Endothelial cell of umbilical vein (primary cell): ENCODE measurements at regions of chr1 and their contacts with region 1.

Region 1: GRCh38 chr1:81876901-81877733 is 76.4 kb downstream of the ADGRL2 start:
- DNase-seq: peak; percentile 83
- H3K4me3 ChIP-seq: no peak overlapping the region
- H3K27ac ChIP-seq: peak overlapping the region; percentile 58
- H3K4me1 ChIP-seq: peaks cover 34% of the 10 kb centered on the region
- H3K27me3 ChIP-seq: no peaks in the 10 kb centered on the region
- CTCF ChIP-seq: no peak
- POLR2A ChIP-seq: no peak

Region 2: GRCh38 chr1:81929106-81929505 is 52.0 kb after region 1 on chr1:
- CTCF ChIA-PET with region 1: no interaction called
- POLR2A ChIA-PET with region 1: no interaction called
- dilution Hi-C with region 1: no loop called
- intact Hi-C with region 1: loop called (anchors 5 kb)
- DNase-seq: no peak
- H3K4me3 ChIP-seq: no peak overlapping the region
- H3K27ac ChIP-seq: no peak overlapping the region
- H3K4me1 ChIP-seq: peaks cover 3% of the 10 kb centered on the region
- H3K27me3 ChIP-seq: no peaks in the 10 kb centered on the region
- CTCF ChIP-seq: no peak
- POLR2A ChIP-seq: no peak